Activated CD8-positive, alpha-beta T cell treated with anti-CD3 and anti-CD28 coated beads for 36 hours (primary cell): ENCODE measurements at regions of chr12 and their contacts with region 1.

Region 1: DNA sequence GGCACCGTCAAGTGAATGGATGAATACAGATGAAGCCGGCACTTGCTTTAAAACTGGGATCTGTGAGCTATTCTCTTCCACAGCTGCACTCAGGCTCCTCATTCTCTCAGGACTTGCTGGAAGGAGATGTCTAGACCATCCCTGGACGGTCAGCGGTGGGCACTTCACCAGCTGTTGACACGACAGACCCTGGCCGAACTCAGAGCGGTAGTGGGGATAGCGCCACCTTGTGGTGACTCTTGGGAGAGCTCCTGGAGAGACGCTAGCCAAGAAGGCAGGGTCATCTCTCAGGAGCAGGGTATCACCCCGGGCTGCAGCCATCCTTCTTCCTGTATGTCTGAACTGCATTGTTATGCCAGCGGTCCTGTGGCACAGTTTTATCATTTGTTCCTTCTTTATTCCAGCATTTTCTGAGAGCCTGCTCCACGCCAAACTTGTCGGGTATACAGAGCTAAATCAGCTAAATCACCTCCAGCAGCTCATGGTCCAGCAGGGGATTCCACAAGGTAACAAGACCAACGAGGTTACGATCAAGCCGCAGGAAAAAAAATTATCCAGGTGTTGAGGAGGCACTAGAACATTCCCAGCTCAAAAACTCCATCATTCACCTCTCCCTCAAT is 10.0 kb downstream of the WNT1 start:
- DNase-seq: peak; percentile 87
- ATAC-seq: peak; percentile 89
- H3K4me3 Mint-ChIP-seq: no peak overlapping the region
- H3K27ac Mint-ChIP-seq: no peak overlapping the region
- H3K4me1 Mint-ChIP-seq: no peaks in the 10 kb centered on the region
- H3K27me3 Mint-ChIP-seq: peaks cover 29% of the 10 kb centered on the region
- CTCF ChIP-seq: peak; percentile 96

Region 2: GRCh38 chr12:48865434-48866290 is 122.5 kb before region 1 on chr12 and contains the start of gene RND1:
- CTCF ChIA-PET with region 1: interaction called, 11 read pairs
- POLR2A ChIA-PET with region 1: no interaction called
- intact Hi-C with region 1: no loop called
- DNase-seq: peak; percentile 91
- ATAC-seq: peak; percentile 94
- H3K4me3 Mint-ChIP-seq: peak within 1 kb of the TSS; percentile 84
- H3K27ac Mint-ChIP-seq: peak within 1 kb of the TSS; percentile 79
- H3K4me1 Mint-ChIP-seq: peaks cover 21% of the 10 kb centered on the region
- H3K27me3 Mint-ChIP-seq: peaks cover 24% of the 10 kb centered on the region
- CTCF ChIP-seq: no peak
- total RNA-seq, gene RND1: 2.3 to 3.2 TPM

Region 3: DNA sequence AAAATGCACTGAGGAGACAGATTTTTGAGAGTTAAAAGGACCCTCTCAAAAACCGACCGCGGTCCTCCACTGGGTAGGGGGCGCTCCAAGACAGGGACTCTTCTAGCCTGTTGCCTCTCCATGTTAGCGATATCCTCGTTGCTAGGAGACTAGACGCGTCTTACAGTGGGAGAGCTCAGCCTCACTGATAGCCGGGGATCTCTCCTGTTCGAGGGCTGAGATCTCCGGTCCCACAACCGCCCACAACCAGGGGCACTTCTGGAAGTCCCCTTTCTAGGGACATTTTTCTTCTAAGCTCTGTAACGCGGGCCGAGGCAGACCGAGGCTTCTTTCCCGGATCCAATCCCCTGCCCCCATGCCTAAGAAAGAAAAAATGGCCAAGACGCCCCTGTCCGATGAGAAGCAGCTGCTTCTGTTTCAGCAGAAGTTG is 84.1 kb before region 1 on chr12:
- CTCF ChIA-PET with region 1: interaction called, 15 read pairs
- POLR2A ChIA-PET with region 1: no interaction called
- intact Hi-C with region 1: no loop called
- DNase-seq: peak; percentile 91
- ATAC-seq: peak; percentile 98
- H3K4me3 Mint-ChIP-seq: peak overlapping the region; percentile 58
- H3K27ac Mint-ChIP-seq: no peak overlapping the region
- H3K4me1 Mint-ChIP-seq: peaks cover 7% of the 10 kb centered on the region
- H3K27me3 Mint-ChIP-seq: no peaks in the 10 kb centered on the region
- CTCF ChIP-seq: peak; percentile 79

Region 4: GRCh38 chr12:48917857-48918537 is 70.1 kb before region 1 on chr12:
- CTCF ChIA-PET with region 1: interaction called, 51 read pairs
- POLR2A ChIA-PET with region 1: no interaction called
- intact Hi-C with region 1: no loop called
- DNase-seq: peak; percentile 59
- ATAC-seq: peak; percentile 72
- H3K4me3 Mint-ChIP-seq: peak overlapping the region; percentile 51
- H3K27ac Mint-ChIP-seq: peak overlapping the region; percentile 90
- H3K4me1 Mint-ChIP-seq: peaks cover 34% of the 10 kb centered on the region
- H3K27me3 Mint-ChIP-seq: no peaks in the 10 kb centered on the region
- CTCF ChIP-seq: no peak

Region 5: GRCh38 chr12:48936379-48936979 is 51.7 kb before region 1 on chr12:
- CTCF ChIA-PET with region 1: interaction called, 896 read pairs
- POLR2A ChIA-PET with region 1: interaction called, 3 read pairs
- intact Hi-C with region 1: no loop called
- DNase-seq: peak; percentile 92
- ATAC-seq: peak; percentile 79
- H3K4me3 Mint-ChIP-seq: no peak overlapping the region
- H3K27ac Mint-ChIP-seq: no peak overlapping the region
- H3K4me1 Mint-ChIP-seq: peaks cover 24% of the 10 kb centered on the region
- H3K27me3 Mint-ChIP-seq: no peaks in the 10 kb centered on the region
- CTCF ChIP-seq: peak; percentile 86

Region 6: GRCh38 chr12:49043856-49044258 is 55.7 kb after region 1 on chr12:
- CTCF ChIA-PET with region 1: interaction called, 13 read pairs
- POLR2A ChIA-PET with region 1: no interaction called
- intact Hi-C with region 1: no loop called
- DNase-seq: peak; percentile 84
- ATAC-seq: peak; percentile 94
- H3K4me3 Mint-ChIP-seq: no peak overlapping the region
- H3K27ac Mint-ChIP-seq: no peak overlapping the region
- H3K4me1 Mint-ChIP-seq: no peaks in the 10 kb centered on the region
- H3K27me3 Mint-ChIP-seq: no peaks in the 10 kb centered on the region
- CTCF ChIP-seq: peak; percentile 86

Region 7: GRCh38 chr12:49088190-49088931 is 100.2 kb after region 1 on chr12:
- CTCF ChIA-PET with region 1: interaction called, 15 read pairs
- POLR2A ChIA-PET with region 1: no interaction called
- intact Hi-C with region 1: no loop called
- DNase-seq: peak; percentile 81
- ATAC-seq: peak; percentile 95
- H3K4me3 Mint-ChIP-seq: no peak overlapping the region
- H3K27ac Mint-ChIP-seq: no peak overlapping the region
- H3K4me1 Mint-ChIP-seq: peaks cover 43% of the 10 kb centered on the region
- H3K27me3 Mint-ChIP-seq: peaks cover 46% of the 10 kb centered on the region
- CTCF ChIP-seq: peak; percentile 88